Endothelial cell of umbilical vein (primary cell): ENCODE measurements at regions of chr19 and their contacts with region 1.

Region 1: DNA sequence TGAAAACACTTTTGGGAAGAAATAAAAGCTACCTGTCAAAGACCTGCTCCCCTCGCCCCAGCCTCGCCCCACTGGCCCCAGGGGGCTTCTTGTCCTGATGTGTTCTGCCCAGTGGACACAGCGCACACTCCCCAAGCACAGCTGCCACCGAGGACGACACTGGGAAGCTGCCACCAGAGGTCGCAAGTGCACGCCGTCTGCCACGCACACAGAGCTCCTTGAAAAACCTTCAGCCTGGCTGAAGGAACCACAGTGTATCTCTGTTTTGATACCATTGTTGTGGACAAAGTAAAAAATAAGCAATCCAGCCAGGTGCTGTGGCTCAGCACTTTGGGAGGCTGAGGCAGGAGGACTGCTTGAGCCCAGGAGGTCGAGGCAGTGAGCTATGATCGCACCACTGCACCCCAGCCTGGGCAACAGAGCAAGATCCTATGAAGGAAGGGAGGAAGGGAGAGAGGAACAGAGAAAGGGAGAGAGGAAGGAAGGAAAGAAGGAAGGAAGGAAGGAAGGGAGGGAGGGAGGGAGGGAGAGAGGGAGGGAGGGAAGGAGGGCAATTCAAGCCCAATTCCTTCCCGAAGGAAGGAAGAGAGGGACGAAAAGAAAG is 57.3 kb downstream of the CEBPG start:
- DNase-seq: peak; percentile 65
- H3K4me3 ChIP-seq: no peak overlapping the region
- H3K27ac ChIP-seq: no peak overlapping the region
- H3K4me1 ChIP-seq: peaks cover 6% of the 10 kb centered on the region
- H3K27me3 ChIP-seq: no peaks in the 10 kb centered on the region
- CTCF ChIP-seq: peak; percentile 73 to 91
- POLR2A ChIP-seq: no peak

Region 2: DNA sequence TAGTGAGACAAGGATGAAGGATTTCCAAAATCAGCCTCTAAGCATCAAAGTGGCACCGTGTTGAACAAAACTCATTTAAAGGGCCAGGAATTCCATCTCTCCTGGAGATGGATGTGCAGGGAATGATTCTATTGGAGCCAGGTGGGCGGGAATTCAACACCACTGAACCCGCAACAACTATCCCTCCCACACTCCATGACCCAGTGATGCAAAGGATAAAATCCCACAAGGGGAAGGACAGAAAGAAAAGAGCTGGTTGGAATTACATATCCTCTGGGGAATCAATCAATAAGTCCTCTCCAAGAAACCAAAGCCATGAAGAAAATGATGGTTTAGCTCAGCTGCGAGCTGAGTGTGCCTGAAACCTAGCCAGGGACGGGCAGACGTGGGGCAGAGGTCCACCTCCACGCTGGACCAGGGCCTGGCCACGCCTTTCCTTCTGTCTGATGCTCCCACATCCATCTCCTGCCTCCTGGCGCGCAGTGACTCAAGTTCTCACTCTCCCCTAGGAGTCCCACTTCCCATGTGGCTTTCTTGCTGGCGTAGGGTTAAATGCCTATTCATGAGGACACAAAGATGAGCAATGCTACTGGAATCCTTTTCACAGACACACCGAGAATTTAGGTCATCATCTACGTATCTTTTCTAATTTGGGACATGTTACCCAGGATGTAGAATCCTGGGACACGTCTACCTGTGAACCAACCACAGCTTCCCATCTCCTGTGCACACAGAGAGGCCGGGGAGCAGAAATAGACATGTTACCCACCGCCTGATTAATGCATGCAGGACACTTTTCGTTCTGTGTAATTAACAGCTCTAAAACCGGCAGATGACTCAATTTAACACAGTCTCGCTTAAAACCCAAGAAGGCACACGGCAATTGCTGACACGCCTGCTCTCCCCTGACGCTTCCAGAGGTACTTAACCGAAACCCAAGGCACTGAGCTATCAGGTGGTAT is 42.2 kb after region 1 on chr19:
- CTCF ChIA-PET with region 1: interaction called, 11 read pairs
- POLR2A ChIA-PET with region 1: no interaction called
- dilution Hi-C with region 1: no loop called
- intact Hi-C with region 1: loop called (anchors 5 kb)
- DNase-seq: peak; percentile 36
- H3K4me3 ChIP-seq: peak overlapping the region in 1 of 3 experiments; percentile 27
- H3K27ac ChIP-seq: peak overlapping the region; percentile 94
- H3K4me1 ChIP-seq: peaks cover 25% of the 10 kb centered on the region
- H3K27me3 ChIP-seq: no peaks in the 10 kb centered on the region
- CTCF ChIP-seq: no peak
- POLR2A ChIP-seq: no peak

Region 3: GRCh38 chr19:33683841-33684535 is 253.2 kb after region 1 on chr19:
- CTCF ChIA-PET with region 1: interaction called, 3 read pairs
- POLR2A ChIA-PET with region 1: no interaction called
- dilution Hi-C with region 1: no loop called
- intact Hi-C with region 1: loop called (anchors 10 kb)
- DNase-seq: peak; percentile 25
- H3K4me3 ChIP-seq: no peak overlapping the region
- H3K27ac ChIP-seq: no peak overlapping the region
- H3K4me1 ChIP-seq: no peaks in the 10 kb centered on the region
- H3K27me3 ChIP-seq: no peaks in the 10 kb centered on the region
- CTCF ChIP-seq: no peak
- POLR2A ChIP-seq: no peak

Region 4: DNA sequence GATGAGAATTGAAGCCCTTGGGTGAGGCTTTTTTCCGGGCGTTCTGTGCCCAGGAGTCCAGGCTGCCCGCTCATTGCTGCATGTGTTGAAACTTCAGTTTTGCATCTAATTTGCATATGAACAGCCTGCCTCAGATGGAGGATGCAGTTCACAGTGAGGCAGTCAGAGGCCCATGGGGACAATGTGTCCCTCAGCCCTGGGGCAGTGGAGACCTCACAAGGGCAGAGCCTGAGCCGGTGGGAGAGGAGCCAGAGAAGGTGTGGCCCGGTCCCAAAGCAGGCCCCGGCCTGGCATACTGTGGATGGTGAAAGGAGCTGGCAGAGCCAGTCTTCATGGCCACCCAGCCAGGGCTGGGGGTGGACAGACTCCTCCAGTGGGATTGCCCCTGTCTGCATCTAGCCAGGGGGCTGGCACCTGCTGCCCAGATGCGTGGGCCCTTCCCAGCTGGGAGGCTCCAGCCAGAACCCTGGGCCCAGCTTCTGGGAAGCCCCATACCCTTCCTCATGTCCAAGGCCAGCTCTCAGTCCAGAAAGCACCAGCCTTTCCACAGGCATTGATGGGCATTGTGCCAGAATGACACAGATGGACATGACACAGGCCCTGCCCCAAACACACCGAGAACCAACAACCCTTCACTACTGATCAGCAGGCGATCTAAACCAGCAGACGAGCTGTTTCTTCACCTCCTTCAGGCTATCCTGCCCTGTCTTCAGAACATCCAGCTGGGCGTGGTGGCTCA is 333.0 kb after region 1 on chr19:
- CTCF ChIA-PET with region 1: interaction called, 284 read pairs
- POLR2A ChIA-PET with region 1: no interaction called
- dilution Hi-C with region 1: no loop called
- intact Hi-C with region 1: no loop called
- DNase-seq: no peak
- H3K4me3 ChIP-seq: no peak overlapping the region
- H3K27ac ChIP-seq: no peak overlapping the region
- H3K4me1 ChIP-seq: no peaks in the 10 kb centered on the region
- H3K27me3 ChIP-seq: no peaks in the 10 kb centered on the region
- CTCF ChIP-seq: no peak
- POLR2A ChIP-seq: no peak

Region 5: DNA sequence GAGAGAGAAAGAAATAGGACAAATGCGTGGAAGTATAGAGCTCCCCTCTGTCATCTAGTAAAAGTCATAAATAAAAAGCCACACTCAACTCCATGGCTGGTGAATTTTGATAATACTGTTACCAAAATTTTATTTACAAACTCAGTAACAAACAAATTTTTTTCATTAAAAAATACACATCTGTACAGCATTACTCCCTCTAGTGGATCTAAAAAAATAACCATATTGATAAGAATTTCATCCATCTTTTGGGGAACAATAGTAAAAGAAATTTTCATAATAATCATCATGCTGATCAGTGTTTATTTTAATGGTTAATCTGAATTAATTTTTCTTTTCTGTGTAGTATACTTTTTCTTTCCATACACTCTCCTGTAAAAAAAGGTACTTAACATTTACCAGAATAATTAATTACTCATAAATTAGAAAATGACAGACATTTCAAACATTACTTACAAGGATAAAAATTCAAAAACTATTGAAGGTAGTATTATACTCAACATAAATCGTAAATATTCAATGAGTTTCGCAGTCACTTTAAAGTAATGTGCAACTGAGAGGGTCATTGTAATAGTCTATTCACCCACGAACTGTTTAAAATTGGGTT is 568.1 kb after region 1 on chr19:
- CTCF ChIA-PET with region 1: interaction called, 6 read pairs
- POLR2A ChIA-PET with region 1: no interaction called
- dilution Hi-C with region 1: no loop called
- intact Hi-C with region 1: loop called (anchors 10 kb)
- DNase-seq: peak; percentile 21
- H3K4me3 ChIP-seq: no peak overlapping the region
- H3K27ac ChIP-seq: no peak overlapping the region
- H3K4me1 ChIP-seq: no peaks in the 10 kb centered on the region
- H3K27me3 ChIP-seq: peaks cover 3 to 6% of the 10 kb centered on the region in 2 experiments
- CTCF ChIP-seq: peak; percentile 11 to 17
- POLR2A ChIP-seq: no peak